Activated CD8-positive, alpha-beta T cell treated with anti-CD3 and anti-CD28 coated beads for 36 hours (primary cell): ENCODE measurements at regions of chr14 and their contacts with region 1.

Region 1: GRCh38 chr14:106491851-106492250 is 965.5 kb downstream of the TMEM121 start:
- DNase-seq: peak; percentile 60
- ATAC-seq: no peak
- H3K4me3 Mint-ChIP-seq: no peak overlapping the region
- H3K27ac Mint-ChIP-seq: no peak overlapping the region
- H3K4me1 Mint-ChIP-seq: peaks cover 20% of the 10 kb centered on the region
- H3K27me3 Mint-ChIP-seq: no peaks in the 10 kb centered on the region
- CTCF ChIP-seq: peak; percentile 58

Region 2: DNA sequence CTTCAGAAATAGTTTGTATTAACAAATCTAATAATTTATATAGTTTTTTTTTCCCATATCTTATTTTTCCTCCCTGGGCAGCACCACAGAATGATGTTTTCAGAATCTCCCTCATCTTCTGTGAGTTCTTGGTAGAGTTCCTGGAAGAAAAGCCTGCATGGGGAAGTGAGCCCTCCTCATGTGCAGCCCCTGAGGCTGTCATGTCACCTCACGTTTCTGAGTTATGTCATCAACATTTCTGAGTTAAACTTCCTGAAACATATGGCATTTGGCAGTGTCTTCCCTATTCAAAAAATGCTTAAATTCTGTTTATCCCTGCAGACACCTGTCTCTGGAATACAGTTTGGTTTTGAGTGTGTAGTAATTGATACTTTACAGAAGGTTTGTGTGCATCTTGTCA is 13.5 kb after region 1 on chr14:
- CTCF ChIA-PET with region 1: interaction called, 106 read pairs
- POLR2A ChIA-PET with region 1: interaction called, 8 read pairs
- intact Hi-C with region 1: no loop called
- DNase-seq: no peak
- ATAC-seq: no peak
- H3K4me3 Mint-ChIP-seq: no peak overlapping the region
- H3K27ac Mint-ChIP-seq: no peak overlapping the region
- H3K4me1 Mint-ChIP-seq: peaks cover 52% of the 10 kb centered on the region
- H3K27me3 Mint-ChIP-seq: peaks cover 1% of the 10 kb centered on the region
- CTCF ChIP-seq: no peak

Region 3: GRCh38 chr14:106511006-106511799 is 19.4 kb after region 1 on chr14:
- CTCF ChIA-PET with region 1: interaction called, 106 read pairs
- POLR2A ChIA-PET with region 1: interaction called, 8 read pairs
- intact Hi-C with region 1: no loop called
- DNase-seq: peak; percentile 71
- ATAC-seq: peak; percentile 68
- H3K4me3 Mint-ChIP-seq: peak overlapping the region; percentile 18
- H3K27ac Mint-ChIP-seq: peak overlapping the region; percentile 62
- H3K4me1 Mint-ChIP-seq: peaks cover 68% of the 10 kb centered on the region
- H3K27me3 Mint-ChIP-seq: no peaks in the 10 kb centered on the region
- CTCF ChIP-seq: no peak